Heart right ventricle (tissue), 16 donors: ENCODE measurements at regions of chr3 and their contacts with region 1.

Region 1: GRCh38 chr3:81643721-81644120 is 117.7 kb downstream of the GBE1 start:
- DNase-seq: no peak
- ATAC-seq: peak in 7 of 8 donors; percentile 55 to 75 (median 67)
- H3K4me3 ChIP-seq: no peak overlapping the region
- H3K27ac ChIP-seq: no peak overlapping the region
- H3K4me1 ChIP-seq: peaks cover 0 to 16% (median 0%) of the 10 kb centered on the region in 9 donors
- H3K27me3 ChIP-seq: no peaks in the 10 kb centered on the region
- CTCF ChIP-seq: peak in 8 of 9 donors; percentile 29 to 60 (median 48)

Region 2: DNA sequence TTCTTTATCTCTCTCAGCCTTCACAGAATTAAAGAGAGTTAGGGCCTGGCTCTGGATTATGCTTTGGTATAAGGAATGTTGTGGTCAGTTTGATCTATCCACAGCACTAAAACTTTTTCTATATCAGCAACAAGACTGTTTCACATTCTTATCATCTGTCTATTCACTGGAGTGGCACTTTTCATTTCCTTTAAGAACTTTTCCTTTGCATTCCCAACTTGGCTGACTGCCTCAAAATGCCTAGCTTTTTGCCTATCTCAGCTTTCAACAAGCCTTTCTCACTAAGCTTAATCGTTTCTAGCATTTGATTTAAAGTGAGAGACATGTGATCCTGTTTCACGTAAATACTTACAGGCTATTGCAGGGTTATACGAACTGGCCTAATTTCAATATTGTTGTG is 354.0 kb before region 1 on chr3:
- intact Hi-C with region 1: loop called in 1 of 10 experiments (anchors 10 kb)
- DNase-seq: no peak
- ATAC-seq: no peak
- H3K4me3 ChIP-seq: no peak overlapping the region
- H3K27ac ChIP-seq: no peak overlapping the region
- H3K4me1 ChIP-seq: no peaks in the 10 kb centered on the region
- H3K27me3 ChIP-seq: no peaks in the 10 kb centered on the region
- CTCF ChIP-seq: no peak

Region 3: GRCh38 chr3:81302045-81302444 is 341.7 kb before region 1 on chr3:
- intact Hi-C with region 1: loop called in 2 of 10 experiments (anchors 10 kb)
- DNase-seq: peak in 1 of 2 donors; percentile 12
- ATAC-seq: no peak
- H3K4me3 ChIP-seq: no peak overlapping the region
- H3K27ac ChIP-seq: no peak overlapping the region
- H3K4me1 ChIP-seq: no peaks in the 10 kb centered on the region
- H3K27me3 ChIP-seq: no peaks in the 10 kb centered on the region
- CTCF ChIP-seq: peak; percentile 22 to 74 (median 65)

Region 4: DNA sequence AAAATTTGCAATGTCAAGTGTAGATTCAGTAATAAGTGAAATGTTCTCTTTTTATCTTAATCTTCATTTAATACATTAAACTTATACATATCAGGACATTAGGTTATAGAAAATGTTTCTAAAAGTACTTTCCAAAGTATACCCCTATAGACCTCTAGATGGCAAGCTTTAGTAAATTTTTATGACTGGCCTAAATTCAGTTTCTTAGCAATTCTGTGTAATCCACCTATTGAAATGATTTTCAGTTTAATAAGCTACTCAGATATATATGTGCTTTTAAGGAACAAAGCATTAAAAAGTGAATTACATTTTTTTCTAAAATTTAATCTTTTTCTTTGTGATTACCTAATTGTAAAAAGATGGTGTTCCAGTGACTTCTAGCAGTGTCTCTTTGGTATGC is 224.5 kb before region 1 on chr3:
- intact Hi-C with region 1: loop called in 4 of 10 experiments (anchors 2 to 10 kb)
- DNase-seq: no peak
- ATAC-seq: no peak
- H3K4me3 ChIP-seq: no peak overlapping the region
- H3K27ac ChIP-seq: no peak overlapping the region
- H3K4me1 ChIP-seq: no peaks in the 10 kb centered on the region
- H3K27me3 ChIP-seq: no peaks in the 10 kb centered on the region
- CTCF ChIP-seq: peak; percentile 21 to 64 (median 54)

Region 5: GRCh38 chr3:81425198-81425868 is 218.4 kb before region 1 on chr3:
- intact Hi-C with region 1: loop called in 3 of 10 experiments (anchors 5 to 10 kb)
- DNase-seq: no peak
- ATAC-seq: no peak
- H3K4me3 ChIP-seq: no peak overlapping the region
- H3K27ac ChIP-seq: no peak overlapping the region
- H3K4me1 ChIP-seq: no peaks in the 10 kb centered on the region
- H3K27me3 ChIP-seq: no peaks in the 10 kb centered on the region
- CTCF ChIP-seq: no peak

Region 6: DNA sequence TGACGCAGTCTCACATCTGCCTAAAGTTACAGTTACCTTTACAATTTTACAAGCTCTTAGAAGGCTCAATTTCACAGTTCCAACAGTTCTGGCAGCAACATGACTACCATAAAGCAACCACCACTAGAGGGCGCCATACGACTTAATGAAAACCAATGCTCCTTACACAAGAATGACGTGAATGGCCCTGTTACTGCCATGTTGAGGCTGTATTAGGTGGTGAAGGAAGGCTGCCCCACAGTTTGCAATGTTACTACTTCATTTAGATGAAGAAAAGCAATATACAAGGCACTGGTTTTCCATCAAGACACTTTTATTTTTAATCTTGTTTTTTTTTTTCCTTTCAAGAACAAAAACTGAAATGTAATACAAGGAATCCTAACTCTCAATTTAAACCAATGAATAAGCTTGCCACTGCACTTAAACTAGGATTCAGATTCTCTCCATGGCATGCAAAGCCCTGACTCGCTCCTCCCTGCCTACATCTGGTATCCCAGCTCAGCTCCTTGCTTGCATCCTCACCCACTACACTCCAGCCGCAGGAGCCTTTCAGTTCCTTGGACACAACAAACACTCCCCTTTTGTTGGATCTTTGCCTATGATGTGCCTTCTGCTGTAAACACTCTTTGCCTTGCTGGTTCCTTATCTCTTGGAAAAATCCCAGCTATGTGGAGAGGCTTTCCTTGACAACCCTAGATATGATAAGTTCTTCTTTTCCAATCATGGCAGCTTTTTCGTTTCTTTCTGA is 153.0 kb before region 1 on chr3:
- intact Hi-C with region 1: loop called in 3 of 10 experiments (anchors 5 to 10 kb)
- DNase-seq: peak; percentile 21 to 81
- ATAC-seq: peak in 7 of 8 donors; percentile 81 to 92 (median 90)
- H3K4me3 ChIP-seq: no peak overlapping the region
- H3K27ac ChIP-seq: peak overlapping the region in 2 of 10 donors; percentile 21 to 66
- H3K4me1 ChIP-seq: peaks cover 0 to 18% (median 8%) of the 10 kb centered on the region in 9 donors
- H3K27me3 ChIP-seq: no peaks in the 10 kb centered on the region
- CTCF ChIP-seq: peak; percentile 53 to 83 (median 73)

Region 7: GRCh38 chr3:81581966-81582599 is 61.6 kb before region 1 on chr3:
- intact Hi-C with region 1: loop called in 2 of 10 experiments (anchors 5 to 10 kb)
- DNase-seq: no peak
- ATAC-seq: peak in 4 of 8 donors; percentile 44 to 61 (median 54)
- H3K4me3 ChIP-seq: no peak overlapping the region
- H3K27ac ChIP-seq: no peak overlapping the region
- H3K4me1 ChIP-seq: peaks cover 0 to 16% (median 6%) of the 10 kb centered on the region in 9 donors
- H3K27me3 ChIP-seq: no peaks in the 10 kb centered on the region
- CTCF ChIP-seq: peak in 8 of 9 donors; percentile 24 to 71 (median 60)

Region 8: GRCh38 chr3:81707996-81708395 is 64.3 kb after region 1 on chr3:
- intact Hi-C with region 1: no loop called
- DNase-seq: no peak
- ATAC-seq: no peak
- H3K4me3 ChIP-seq: no peak overlapping the region
- H3K27ac ChIP-seq: no peak overlapping the region
- H3K4me1 ChIP-seq: peaks cover 0 to 46% (median 31%) of the 10 kb centered on the region in 9 donors
- H3K27me3 ChIP-seq: no peaks in the 10 kb centered on the region
- CTCF ChIP-seq: no peak